Heart left ventricle (tissue), 16 donors: ENCODE measurements at regions of chr6 and their contacts with region 1.

Region 1: GRCh38 chr6:83132121-83132520 is 60.9 kb downstream of the PGM3 start:
- DNase-seq: no peak
- ATAC-seq: no peak
- H3K4me3 ChIP-seq: no peak overlapping the region
- H3K27ac ChIP-seq: no peak overlapping the region
- H3K4me1 ChIP-seq: no peaks in the 10 kb centered on the region
- H3K27me3 ChIP-seq: no peaks in the 10 kb centered on the region
- CTCF ChIP-seq: no peak
- POLR2A ChIP-seq: no peak

Region 2: DNA sequence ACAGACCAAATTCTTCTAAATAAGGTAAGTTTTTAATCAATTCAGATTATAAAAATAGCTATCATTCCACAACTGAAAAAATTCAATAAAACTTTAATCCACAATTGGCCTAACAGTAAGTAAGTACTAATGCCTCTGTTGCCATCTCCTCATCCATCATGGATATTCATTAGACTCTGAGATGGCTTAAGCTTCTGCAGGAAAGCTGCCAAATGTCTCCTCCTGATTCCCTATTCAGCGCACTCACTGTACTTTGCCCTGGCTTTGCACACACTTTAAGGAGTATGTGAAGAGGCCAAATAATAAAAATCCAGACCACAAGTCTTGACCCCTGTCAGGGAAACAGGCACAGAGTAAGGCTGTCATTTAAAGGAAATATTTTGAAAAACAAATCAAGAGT is 37.4 kb after region 1 on chr6:
- intact Hi-C with region 1: loop called in 1 of 10 experiments (anchors 5 kb)
- DNase-seq: no peak
- ATAC-seq: no peak
- H3K4me3 ChIP-seq: no peak overlapping the region
- H3K27ac ChIP-seq: no peak overlapping the region
- H3K4me1 ChIP-seq: no peaks in the 10 kb centered on the region
- H3K27me3 ChIP-seq: no peaks in the 10 kb centered on the region
- CTCF ChIP-seq: no peak
- POLR2A ChIP-seq: no peak